Panc1 (cell line): ENCODE measurements at regions of chr13 and their contacts with region 1.

Region 1: DNA sequence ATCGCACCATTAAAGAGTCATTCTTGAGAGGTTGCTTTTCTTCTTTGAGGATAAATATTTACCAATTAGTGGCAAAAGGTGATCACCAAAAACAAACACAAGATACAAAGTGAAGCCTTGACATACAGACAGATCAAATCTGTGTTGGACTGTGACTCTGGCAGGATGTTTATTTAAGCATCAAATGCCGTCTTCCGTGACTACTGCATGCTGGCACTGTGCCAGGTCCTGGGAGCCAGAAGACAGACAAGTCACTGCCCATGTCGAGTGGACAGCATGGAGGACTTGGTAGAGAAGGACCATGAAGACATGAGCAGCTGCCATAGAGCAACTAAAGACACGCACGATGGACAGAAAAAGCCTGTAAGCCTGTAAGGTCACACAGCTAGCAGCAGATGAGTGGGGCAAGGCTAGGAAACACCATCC is 92.8 kb upstream of the FARP1 start:
- DNase-seq: no peak
- ATAC-seq: no peak
- H3K4me3 ChIP-seq: no peak overlapping the region
- H3K27ac ChIP-seq: no peak overlapping the region
- H3K4me1 ChIP-seq: no peaks in the 10 kb centered on the region
- H3K27me3 ChIP-seq: no peaks in the 10 kb centered on the region
- CTCF ChIP-seq: no peak

Region 2: DNA sequence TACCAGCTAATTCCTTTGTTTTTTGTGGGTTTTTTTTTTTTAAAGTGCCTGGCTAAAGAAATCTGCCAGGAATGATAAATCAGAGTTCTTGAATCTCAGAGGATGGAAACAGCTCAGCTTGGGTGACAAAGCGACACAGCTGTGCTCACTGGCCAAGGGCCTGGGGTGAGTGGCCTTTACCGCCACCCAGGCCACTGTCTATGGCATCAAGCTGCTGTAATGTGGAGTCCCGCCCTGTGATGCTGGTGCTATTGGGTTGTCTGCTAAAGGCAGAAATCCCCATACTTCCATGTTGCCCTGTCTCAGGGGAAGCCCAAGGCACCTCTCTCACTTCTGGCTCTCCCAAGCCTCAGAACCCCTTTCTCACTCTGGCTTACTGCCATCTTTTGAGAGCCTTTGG is 10.2 kb after region 1 on chr13:
- CTCF ChIA-PET with region 1: no interaction called
- POLR2A ChIA-PET with region 1: interaction called, 16 read pairs
- in situ Hi-C with region 1: no loop called
- intact Hi-C with region 1: no loop called
- DNase-seq: no peak
- ATAC-seq: no peak
- H3K4me3 ChIP-seq: no peak overlapping the region
- H3K27ac ChIP-seq: no peak overlapping the region
- H3K4me1 ChIP-seq: no peaks in the 10 kb centered on the region
- H3K27me3 ChIP-seq: no peaks in the 10 kb centered on the region
- CTCF ChIP-seq: no peak

Region 3: GRCh38 chr13:98175043-98175442 is 125.0 kb after region 1 on chr13:
- CTCF ChIA-PET with region 1: no interaction called
- POLR2A ChIA-PET with region 1: no interaction called
- in situ Hi-C with region 1: no loop called
- intact Hi-C with region 1: no loop called
- DNase-seq: no peak
- ATAC-seq: no peak
- H3K4me3 ChIP-seq: no peak overlapping the region
- H3K27ac ChIP-seq: peak overlapping the region; percentile 85
- H3K4me1 ChIP-seq: peaks cover 42% of the 10 kb centered on the region
- H3K27me3 ChIP-seq: no peaks in the 10 kb centered on the region
- CTCF ChIP-seq: no peak